B cell (primary cell): ENCODE measurements at regions of chr10 and their contacts with region 1.

Region 1: GRCh38 chr10:110414563-110415309 is 83.0 kb upstream of the DUSP5 start:
- DNase-seq: peak; percentile 92
- ATAC-seq: peak; percentile 92
- H3K4me3 ChIP-seq: peak overlapping the region in 1 of 5 experiments; percentile 11
- H3K4me3 Mint-ChIP-seq: peak overlapping the region; percentile 60
- H3K27ac ChIP-seq: no peak overlapping the region
- H3K27ac Mint-ChIP-seq: peak overlapping the region; percentile 76
- H3K4me1 ChIP-seq: peaks cover 57 to 74% of the 10 kb centered on the region in 2 donors
- H3K4me1 Mint-ChIP-seq: peaks cover 69% of the 10 kb centered on the region
- H3K27me3 ChIP-seq: peaks cover 0 to 28% (median 7%) of the 10 kb centered on the region in 4 experiments
- H3K27me3 Mint-ChIP-seq: peaks cover 13% of the 10 kb centered on the region
- CTCF ChIP-seq: no peak

Region 2: DNA sequence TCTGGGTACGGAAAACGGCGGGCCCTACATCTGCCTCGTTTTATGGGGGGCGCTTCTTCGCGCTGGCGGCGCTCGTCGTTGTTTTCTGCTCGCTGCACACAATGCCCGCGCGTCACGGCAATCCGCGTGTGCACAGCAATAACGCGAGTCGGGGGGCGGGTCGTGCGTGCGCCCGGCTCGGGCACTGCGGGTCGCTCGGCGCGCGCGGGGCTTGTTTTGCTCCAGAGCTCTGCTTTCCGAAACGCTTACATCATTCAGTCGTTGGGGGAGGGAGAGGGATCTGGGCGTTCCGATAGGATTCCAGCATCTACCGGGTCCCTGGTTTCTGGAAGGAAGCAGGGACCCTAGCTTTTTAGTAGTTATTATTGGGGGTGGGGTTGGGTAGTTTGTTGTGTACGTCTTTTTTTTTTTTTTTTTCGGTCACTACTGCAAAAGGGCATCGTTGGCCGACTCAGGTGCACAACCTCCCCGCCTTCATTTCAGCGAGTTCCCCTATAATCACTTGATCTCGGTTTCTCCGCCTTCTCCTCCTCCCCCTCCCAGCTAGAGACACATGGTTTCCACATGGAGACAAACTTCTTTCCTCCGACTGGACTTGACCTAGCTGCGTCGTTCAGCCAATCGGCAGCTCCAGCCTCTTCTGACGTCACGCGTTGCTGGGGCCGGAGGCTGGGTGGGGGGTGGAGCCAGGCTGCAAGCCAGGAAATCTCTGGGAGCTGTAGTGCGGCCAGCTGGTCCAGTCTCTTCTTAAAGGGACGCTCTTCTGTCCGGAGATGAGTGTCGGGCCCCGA is 203.9 kb before region 1 on chr10:
- CTCF ChIA-PET with region 1: no interaction called
- POLR2A ChIA-PET with region 1: no interaction called
- intact Hi-C with region 1: loop called (anchors 5 kb)
- DNase-seq: peak; percentile 94
- ATAC-seq: peak; percentile 68
- H3K4me3 ChIP-seq: peak overlapping the region; percentile 67 to 90 (median 82)
- H3K4me3 Mint-ChIP-seq: peak overlapping the region; percentile 88
- H3K27ac ChIP-seq: peak overlapping the region; percentile 82 to 85
- H3K27ac Mint-ChIP-seq: peak overlapping the region; percentile 97
- H3K4me1 ChIP-seq: peaks cover 44 to 67% of the 10 kb centered on the region in 2 donors
- H3K4me1 Mint-ChIP-seq: peaks cover 58% of the 10 kb centered on the region
- H3K27me3 ChIP-seq: peaks cover 0 to 18% (median 7%) of the 10 kb centered on the region in 4 experiments
- H3K27me3 Mint-ChIP-seq: peaks cover 4% of the 10 kb centered on the region
- CTCF ChIP-seq: no peak

Region 3: DNA sequence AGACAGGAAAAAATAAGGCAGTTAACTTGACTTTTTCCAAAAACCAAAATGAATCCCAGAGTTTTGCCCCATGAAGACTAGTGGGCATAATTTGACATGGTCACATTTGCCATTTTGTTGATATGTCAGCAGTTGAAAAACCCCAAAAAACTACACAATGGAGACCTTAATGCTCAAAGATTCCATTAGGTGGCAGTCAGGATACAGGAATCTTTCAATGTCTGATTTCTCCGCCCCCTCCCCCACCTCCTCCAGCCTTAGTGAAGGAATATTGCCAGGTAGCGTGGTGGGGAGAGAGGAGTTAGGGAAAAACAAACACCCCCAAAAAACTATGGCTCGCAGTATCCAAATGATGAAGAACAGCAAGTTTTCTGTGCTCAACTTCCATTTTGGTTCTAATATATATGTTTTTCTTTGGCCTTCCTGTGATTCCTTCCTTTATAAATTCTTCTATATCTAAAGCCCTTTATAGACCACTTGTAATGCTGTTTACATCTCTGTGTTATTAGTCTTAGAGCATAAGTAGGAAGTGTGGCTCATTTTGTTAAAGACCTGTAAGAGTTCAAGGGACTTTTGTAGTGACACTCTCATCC is 103.3 kb before region 1 on chr10:
- CTCF ChIA-PET with region 1: interaction called, 4 read pairs
- POLR2A ChIA-PET with region 1: no interaction called
- intact Hi-C with region 1: loop called (anchors 1 kb)
- DNase-seq: peak; percentile 73
- ATAC-seq: peak; percentile 78
- H3K4me3 ChIP-seq: no peak overlapping the region
- H3K4me3 Mint-ChIP-seq: no peak overlapping the region
- H3K27ac ChIP-seq: no peak overlapping the region
- H3K27ac Mint-ChIP-seq: no peak overlapping the region
- H3K4me1 ChIP-seq: peaks cover 3% of the 10 kb centered on the region in 2 donors
- H3K4me1 Mint-ChIP-seq: peaks cover 8% of the 10 kb centered on the region
- H3K27me3 ChIP-seq: no peaks in the 10 kb centered on the region
- H3K27me3 Mint-ChIP-seq: peaks cover 4% of the 10 kb centered on the region
- CTCF ChIP-seq: peak; percentile 76

Region 4: DNA sequence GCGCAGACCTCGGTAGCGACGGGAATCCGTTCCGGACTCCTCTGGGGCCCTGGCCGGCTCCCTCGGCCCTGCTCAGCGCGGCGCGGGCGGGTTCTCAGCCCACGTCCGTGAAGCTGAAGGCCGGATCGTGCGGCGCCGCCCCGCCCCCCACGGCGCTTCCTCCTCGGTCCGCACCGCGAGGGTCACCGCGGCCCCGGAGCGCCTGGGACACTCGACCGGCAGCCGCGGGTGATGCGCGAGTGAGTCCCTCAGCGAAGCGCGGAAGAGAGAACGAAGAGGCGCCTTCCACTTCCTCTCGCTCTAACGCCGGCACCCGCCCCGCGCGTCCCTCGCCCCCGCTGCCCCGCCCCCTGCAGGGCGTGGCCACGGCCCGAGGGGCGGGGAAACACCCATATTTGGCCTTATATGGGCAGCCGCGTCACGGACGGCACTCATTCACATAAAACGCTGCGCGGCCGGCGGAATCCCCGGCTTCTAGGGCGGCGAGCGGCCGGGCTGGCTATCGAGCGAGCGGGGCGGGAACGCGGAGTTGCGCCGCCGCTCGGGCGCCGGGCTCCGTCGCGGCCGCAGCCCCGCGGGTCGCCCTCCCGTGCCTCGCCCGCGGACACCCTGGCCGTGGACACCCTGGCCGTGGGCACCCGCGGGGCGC is 82.8 kb after region 1 on chr10 and contains the start of gene DUSP5:
- CTCF ChIA-PET with region 1: interaction called, 16 read pairs
- POLR2A ChIA-PET with region 1: interaction called, 11 read pairs
- intact Hi-C with region 1: loop called (anchors 1 kb)
- DNase-seq: peak; percentile 99
- ATAC-seq: peak; percentile 91
- H3K4me3 ChIP-seq: peak within 1 kb of the TSS in 4 of 5 experiments; percentile 57 to 71 (median 62)
- H3K4me3 Mint-ChIP-seq: peak within 1 kb of the TSS; percentile 93
- H3K27ac ChIP-seq: peak within 1 kb of the TSS; percentile 65 to 80
- H3K27ac Mint-ChIP-seq: peak within 1 kb of the TSS; percentile 93
- H3K4me1 ChIP-seq: peaks cover 35 to 51% of the 10 kb centered on the region in 2 donors
- H3K4me1 Mint-ChIP-seq: peaks cover 56% of the 10 kb centered on the region
- H3K27me3 ChIP-seq: peaks cover 0 to 14% (median 2%) of the 10 kb centered on the region in 4 experiments
- H3K27me3 Mint-ChIP-seq: peaks cover 6% of the 10 kb centered on the region
- CTCF ChIP-seq: no peak
- total RNA-seq, gene DUSP5: 10.0 and 10.8 TPM in 2 replicates

Region 5: GRCh38 chr10:110535958-110536891 is 121.5 kb after region 1 on chr10:
- CTCF ChIA-PET with region 1: no interaction called
- POLR2A ChIA-PET with region 1: no interaction called
- intact Hi-C with region 1: loop called (anchors 1 kb)
- DNase-seq: peak; percentile 79
- ATAC-seq: peak; percentile 80
- H3K4me3 ChIP-seq: no peak overlapping the region
- H3K4me3 Mint-ChIP-seq: peak overlapping the region; percentile 28
- H3K27ac ChIP-seq: no peak overlapping the region
- H3K27ac Mint-ChIP-seq: peak overlapping the region; percentile 46
- H3K4me1 ChIP-seq: peaks cover 21 to 23% of the 10 kb centered on the region in 2 donors
- H3K4me1 Mint-ChIP-seq: peaks cover 24% of the 10 kb centered on the region
- H3K27me3 ChIP-seq: peaks cover 0 to 2% (median 0%) of the 10 kb centered on the region in 4 experiments
- H3K27me3 Mint-ChIP-seq: peaks cover 4% of the 10 kb centered on the region
- CTCF ChIP-seq: peak; percentile 40